ENCODE measurements at regions of chr1 and their contacts with region 1.

Region 1: GRCh38 chr1:234409328-234409727 is 36.1 kb downstream of the COA6 start:
- DNase-seq: peak; percentile 48 to 74 (median 65)
- H3K4me3 ChIP-seq: peak overlapping the region in 1 of 2 donors; percentile 22
- H3K4me3 Mint-ChIP-seq: peak overlapping the region; percentile 68 to 91 (median 83)
- H3K27ac ChIP-seq: peak overlapping the region; percentile 62
- H3K27ac Mint-ChIP-seq: peak overlapping the region; percentile 79 to 99 (median 96)
- H3K4me1 ChIP-seq: peaks cover 18% of the 10 kb centered on the region
- H3K4me1 Mint-ChIP-seq: peaks cover 9 to 30% (median 17%) of the 10 kb centered on the region in 4 donors
- H3K27me3 ChIP-seq: no peaks in the 10 kb centered on the region
- H3K27me3 Mint-ChIP-seq: no peaks in the 10 kb centered on the region

Region 2: GRCh38 chr1:234326497-234327366 is 82.6 kb before region 1 on chr1:
- CTCF ChIA-PET with region 1: interaction called, 91 read pairs
- POLR2A ChIA-PET with region 1: interaction called, 6 read pairs
- intact Hi-C with region 1: loop called (anchors 1 kb)
- DNase-seq: peak; percentile 69 to 76 (median 70)
- H3K4me3 ChIP-seq: peak overlapping the region; percentile 20 to 71
- H3K4me3 Mint-ChIP-seq: peak overlapping the region; percentile 89 to 97 (median 92)
- H3K27ac ChIP-seq: peak overlapping the region; percentile 40
- H3K27ac Mint-ChIP-seq: peak overlapping the region; percentile 52 to 98 (median 85)
- H3K4me1 ChIP-seq: peaks cover 8% of the 10 kb centered on the region
- H3K4me1 Mint-ChIP-seq: peaks cover 7 to 33% (median 18%) of the 10 kb centered on the region in 4 donors
- H3K27me3 ChIP-seq: no peaks in the 10 kb centered on the region
- H3K27me3 Mint-ChIP-seq: peaks cover 1 to 26% of the 10 kb centered on the region in 2 donors

Region 3: GRCh38 chr1:234393190-234393589 is 16.1 kb before region 1 on chr1:
- CTCF ChIA-PET with region 1: interaction called, 18 read pairs
- POLR2A ChIA-PET with region 1: interaction called, 11 read pairs
- intact Hi-C with region 1: loop called (anchors 1 kb)
- DNase-seq: peak in 1 of 5 donors; percentile 9
- H3K4me3 ChIP-seq: no peak overlapping the region
- H3K4me3 Mint-ChIP-seq: no peak overlapping the region
- H3K27ac ChIP-seq: no peak overlapping the region
- H3K27ac Mint-ChIP-seq: peak overlapping the region in 5 of 7 donors; percentile 22 to 70 (median 57)
- H3K4me1 ChIP-seq: no peaks in the 10 kb centered on the region
- H3K4me1 Mint-ChIP-seq: peaks cover 4 to 14% (median 7%) of the 10 kb centered on the region in 4 donors
- H3K27me3 ChIP-seq: no peaks in the 10 kb centered on the region
- H3K27me3 Mint-ChIP-seq: no peaks in the 10 kb centered on the region

Region 4: DNA sequence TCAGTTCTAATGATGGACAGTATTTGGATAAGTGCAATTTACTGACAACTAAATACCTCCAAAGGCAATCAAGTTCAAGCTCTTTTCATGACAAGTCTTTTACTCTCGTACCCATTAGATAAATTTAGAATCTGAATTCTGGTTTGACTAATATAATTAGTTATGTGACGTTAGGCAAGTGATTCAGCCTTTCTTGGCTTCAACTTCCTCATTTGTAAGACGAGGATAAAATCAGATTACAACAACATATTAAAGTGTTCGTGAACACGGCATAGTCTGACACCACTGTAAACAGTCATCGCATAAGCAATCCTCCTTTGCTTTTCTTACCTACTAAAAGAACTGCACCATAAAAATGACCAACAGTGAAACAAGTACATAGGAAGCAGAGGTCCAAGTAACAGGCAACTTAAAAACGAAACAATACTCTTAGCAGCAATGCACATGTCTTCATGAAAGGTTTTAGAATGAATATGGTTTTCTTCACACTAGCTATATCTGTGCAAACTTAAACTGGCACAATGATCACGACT is 10.4 kb before region 1 on chr1:
- CTCF ChIA-PET with region 1: interaction called, 18 read pairs
- POLR2A ChIA-PET with region 1: interaction called, 11 read pairs
- intact Hi-C with region 1: loop called (anchors 1 kb)
- DNase-seq: no peak
- H3K4me3 ChIP-seq: peak overlapping the region in 1 of 2 donors; percentile 48
- H3K4me3 Mint-ChIP-seq: peak overlapping the region; percentile 68 to 94 (median 82)
- H3K27ac ChIP-seq: peak overlapping the region; percentile 22
- H3K27ac Mint-ChIP-seq: peak overlapping the region; percentile 3 to 94 (median 84)
- H3K4me1 ChIP-seq: peaks cover 35% of the 10 kb centered on the region
- H3K4me1 Mint-ChIP-seq: peaks cover 39 to 55% (median 50%) of the 10 kb centered on the region in 4 donors
- H3K27me3 ChIP-seq: no peaks in the 10 kb centered on the region
- H3K27me3 Mint-ChIP-seq: no peaks in the 10 kb centered on the region